CD8-positive, alpha-beta T cell (primary cell): ENCODE measurements at regions of chr2 and their contacts with region 1.

Region 1: GRCh38 chr2:130181325-130181879 is at the start of gene SMPD4:
- DNase-seq: peak; percentile 96 to 99 (median 98)
- ATAC-seq: peak; percentile 78
- H3K4me3 ChIP-seq: peak within 1 kb of the TSS; percentile 63 to 86
- H3K4me3 Mint-ChIP-seq: peak within 1 kb of the TSS; percentile 92
- H3K27ac ChIP-seq: peak within 1 kb of the TSS; percentile 81 to 89
- H3K27ac Mint-ChIP-seq: peak within 1 kb of the TSS; percentile 95
- H3K4me1 ChIP-seq: peaks cover 22% of the 10 kb centered on the region
- H3K4me1 Mint-ChIP-seq: peaks cover 27% of the 10 kb centered on the region
- H3K27me3 ChIP-seq: no peaks in the 10 kb centered on the region
- H3K27me3 Mint-ChIP-seq: no peaks in the 10 kb centered on the region
- CTCF ChIP-seq: no peak
- total RNA-seq, gene SMPD4: 108 to 114 TPM

Region 2: DNA sequence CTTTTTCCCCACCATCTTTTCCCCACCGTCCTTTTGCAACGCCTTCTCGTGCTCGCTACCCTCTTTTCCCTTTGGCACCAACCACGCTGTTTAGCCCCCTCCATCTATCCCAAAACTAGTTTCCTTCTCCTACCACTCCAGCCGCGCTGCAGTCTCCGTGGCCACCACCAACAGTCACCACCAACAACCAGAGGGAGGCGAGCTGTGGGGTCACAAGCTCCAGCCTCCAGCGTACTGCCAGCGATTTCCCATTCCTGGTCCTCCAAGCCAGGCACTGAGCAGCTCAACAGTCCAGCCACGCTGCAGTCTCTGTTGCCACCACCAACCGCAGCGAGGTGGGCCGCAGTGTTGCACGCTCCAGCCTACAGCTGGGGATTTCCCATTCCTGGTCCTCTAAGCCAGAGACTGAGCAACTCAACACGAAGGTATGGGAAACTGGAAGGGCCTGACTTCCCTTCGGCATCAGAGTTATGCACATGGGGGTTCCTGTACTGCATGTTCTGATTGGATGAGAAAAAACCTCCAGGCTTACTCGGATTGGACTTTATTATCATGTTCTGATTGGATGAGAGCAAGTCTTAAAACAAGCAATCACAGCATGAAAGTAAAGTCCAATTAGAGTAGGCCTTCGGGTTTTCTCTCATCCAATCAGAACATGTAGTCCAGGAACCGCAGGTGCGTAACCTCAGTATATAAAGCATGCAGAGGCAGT is 119.0 kb after region 1 on chr2:
- CTCF ChIA-PET with region 1: no interaction called
- POLR2A ChIA-PET with region 1: no interaction called
- intact Hi-C with region 1: no loop called
- DNase-seq: no peak
- ATAC-seq: no peak
- H3K4me3 ChIP-seq: no peak overlapping the region
- H3K4me3 Mint-ChIP-seq: no peak overlapping the region
- H3K27ac ChIP-seq: no peak overlapping the region
- H3K27ac Mint-ChIP-seq: no peak overlapping the region
- H3K4me1 ChIP-seq: no peaks in the 10 kb centered on the region
- H3K4me1 Mint-ChIP-seq: no peaks in the 10 kb centered on the region
- H3K27me3 ChIP-seq: peaks cover 0 to 5% of the 10 kb centered on the region in 2 experiments
- H3K27me3 Mint-ChIP-seq: peaks cover 19% of the 10 kb centered on the region
- CTCF ChIP-seq: no peak

Region 3: DNA sequence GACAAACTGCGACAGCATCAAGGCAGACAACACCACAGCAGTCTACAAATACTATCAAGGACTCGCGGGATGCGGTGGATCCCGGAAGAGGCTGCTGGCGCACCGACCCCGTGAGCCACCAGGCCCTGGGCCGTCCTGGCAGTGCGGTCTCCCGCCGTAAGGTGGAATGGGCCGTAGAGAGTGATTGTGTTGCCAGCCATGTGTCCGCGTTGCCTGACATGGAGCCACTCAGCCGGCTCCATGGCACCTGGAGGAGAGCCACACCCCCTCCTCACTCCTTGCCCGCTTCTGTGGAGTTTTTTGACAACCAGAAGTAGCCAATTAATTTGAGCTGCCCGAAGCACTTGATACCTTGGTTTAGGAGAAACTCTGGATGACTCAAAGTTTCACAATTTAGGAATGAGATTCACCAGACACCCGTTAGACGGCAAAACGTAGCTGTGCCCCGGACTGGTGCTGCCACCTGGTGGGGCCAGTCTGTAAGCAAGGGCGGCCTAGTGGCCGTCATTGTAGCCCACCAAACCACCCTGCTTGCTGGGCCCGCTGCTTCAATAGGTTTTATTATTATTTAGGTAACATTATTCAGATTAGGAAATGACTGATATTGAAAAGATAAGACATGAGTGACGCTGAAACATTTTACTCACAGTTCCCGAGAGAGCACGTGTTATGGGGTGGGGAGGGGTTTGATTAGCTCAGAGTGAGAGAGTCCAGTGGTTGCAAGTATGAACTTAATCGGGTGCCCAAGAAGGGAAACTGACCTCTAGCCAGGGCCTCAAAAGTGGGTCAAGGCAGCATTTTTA is 151.1 kb after region 1 on chr2:
- CTCF ChIA-PET with region 1: interaction called, 7 read pairs
- POLR2A ChIA-PET with region 1: interaction called, 4 read pairs
- intact Hi-C with region 1: loop called (anchors 1 to 2 kb)
- DNase-seq: peak; percentile 48 to 80 (median 72)
- ATAC-seq: peak; percentile 87
- H3K4me3 ChIP-seq: no peak overlapping the region
- H3K4me3 Mint-ChIP-seq: peak overlapping the region; percentile 65
- H3K27ac ChIP-seq: no peak overlapping the region
- H3K27ac Mint-ChIP-seq: no peak overlapping the region
- H3K4me1 ChIP-seq: peaks cover 6% of the 10 kb centered on the region
- H3K4me1 Mint-ChIP-seq: peaks cover 8% of the 10 kb centered on the region
- H3K27me3 ChIP-seq: peaks cover 0 to 4% of the 10 kb centered on the region in 2 experiments
- H3K27me3 Mint-ChIP-seq: peaks cover 27% of the 10 kb centered on the region
- CTCF ChIP-seq: peak; percentile 87

Region 4: GRCh38 chr2:130727286-130728018 is 546.0 kb after region 1 on chr2:
- CTCF ChIA-PET with region 1: no interaction called
- POLR2A ChIA-PET with region 1: no interaction called
- intact Hi-C with region 1: loop called (anchors 5 kb)
- DNase-seq: peak; percentile 81 to 94 (median 89)
- ATAC-seq: peak; percentile 96
- H3K4me3 ChIP-seq: peak overlapping the region; percentile 72 to 81
- H3K4me3 Mint-ChIP-seq: peak overlapping the region; percentile 84
- H3K27ac ChIP-seq: peak overlapping the region; percentile 66 to 85
- H3K27ac Mint-ChIP-seq: peak overlapping the region; percentile 81
- H3K4me1 ChIP-seq: peaks cover 16% of the 10 kb centered on the region
- H3K4me1 Mint-ChIP-seq: peaks cover 15% of the 10 kb centered on the region
- H3K27me3 ChIP-seq: no peaks in the 10 kb centered on the region
- H3K27me3 Mint-ChIP-seq: no peaks in the 10 kb centered on the region
- CTCF ChIP-seq: no peak